ENCODE measurements at regions of chr7 and their contacts with region 1.

Region 1: DNA sequence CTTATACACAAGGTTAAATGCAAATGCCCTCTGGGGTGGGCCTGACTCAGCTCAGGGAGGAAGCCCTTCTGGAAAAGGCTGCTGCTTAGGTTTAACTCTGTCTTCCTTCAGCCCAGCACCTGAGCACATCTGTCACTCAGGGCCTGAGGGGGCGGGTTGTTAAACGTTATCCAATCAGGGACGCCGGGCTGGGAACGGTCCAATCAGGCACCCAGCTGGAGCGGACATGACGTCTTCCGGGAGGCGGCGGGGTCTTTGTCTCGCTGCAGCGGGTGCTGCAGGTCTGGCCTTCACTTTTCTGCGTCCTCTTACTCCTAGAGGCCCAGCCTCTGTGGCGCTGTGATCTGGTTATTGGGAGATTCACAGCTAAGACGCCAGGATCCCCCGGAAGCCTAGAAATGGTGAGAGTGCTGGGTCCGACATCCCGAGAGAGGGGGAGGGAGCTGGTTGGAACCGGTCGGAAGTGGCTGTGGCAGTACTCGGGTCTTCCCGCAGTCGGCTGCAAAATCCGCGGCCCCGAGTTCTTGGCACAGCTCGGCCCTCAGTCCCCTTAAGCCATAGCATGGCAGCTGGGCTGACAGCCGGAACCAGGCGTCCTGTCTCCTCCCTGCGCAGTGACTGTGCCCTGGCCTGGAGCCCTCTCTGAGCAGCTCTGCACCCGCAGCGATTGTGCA is at the start of gene ZNF138:
- DNase-seq: peak; percentile 95 to 98 (median 96)
- ATAC-seq: peak; percentile 100
- H3K4me3 ChIP-seq: peak within 1 kb of the TSS; percentile 40 to 97 (median 83)
- H3K27ac ChIP-seq: peak within 1 kb of the TSS; percentile 43 to 88 (median 81)
- H3K4me1 ChIP-seq: peaks cover 0 to 22% (median 12%) of the 10 kb centered on the region in 12 donors
- H3K27me3 ChIP-seq: no peaks in the 10 kb centered on the region
- CTCF ChIP-seq: peak in 1 of 12 donors; percentile 17
- POLR2A ChIP-seq: peak in 1 of 2 donors; percentile 60
- total RNA-seq, gene ZNF138: 3.1 to 8.1 (median 4.9) TPM

Region 2: DNA sequence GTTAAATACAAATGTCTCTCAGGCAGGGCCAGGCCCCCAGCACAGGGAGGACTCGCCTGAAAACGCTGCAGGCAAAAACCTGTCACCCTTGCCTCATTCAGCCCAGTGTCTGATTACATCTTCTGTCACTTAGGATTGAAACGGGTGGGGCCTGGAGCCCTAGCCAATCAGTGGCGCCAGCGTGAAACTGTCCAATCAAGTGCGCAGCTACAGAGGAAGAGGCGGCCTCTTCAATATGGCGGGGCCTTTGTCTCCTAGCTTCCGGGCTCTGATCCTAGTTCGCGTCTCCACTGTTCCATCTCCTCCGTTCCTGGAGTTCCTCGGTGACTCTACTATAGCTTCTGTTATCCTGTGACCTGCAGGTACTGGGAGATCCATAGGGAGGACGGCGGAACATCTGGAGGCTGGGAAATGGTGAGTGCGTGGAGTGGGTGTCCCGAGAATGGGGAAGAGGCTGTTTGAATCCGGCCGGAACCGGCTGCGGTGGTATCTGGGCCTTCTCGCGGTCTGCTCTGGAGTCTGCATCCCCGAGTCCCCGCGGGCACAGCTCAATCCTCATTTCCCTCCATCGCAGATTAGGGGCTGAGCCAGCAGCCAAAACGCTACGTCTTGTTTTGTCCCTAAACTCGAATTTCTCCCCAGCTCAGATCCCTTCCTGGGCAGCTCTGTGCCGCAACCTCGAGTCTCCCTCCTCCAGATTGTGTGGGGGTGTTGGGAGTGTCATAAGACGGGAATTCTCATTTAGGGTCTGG is 480.4 kb before region 1 on chr7 and contains the start of gene ZNF736:
- intact Hi-C with region 1: loop called in 1 of 10 experiments (anchors 10 kb)
- DNase-seq: peak; percentile 89 to 93 (median 92)
- ATAC-seq: peak; percentile 99 to 100 (median 100)
- H3K4me3 ChIP-seq: peak within 1 kb of the TSS; percentile 51 to 89 (median 73)
- H3K27ac ChIP-seq: peak within 1 kb of the TSS in 11 of 12 donors; percentile 24 to 79 (median 58)
- H3K4me1 ChIP-seq: peaks cover 0 to 25% (median 16%) of the 10 kb centered on the region in 12 donors
- H3K27me3 ChIP-seq: no peaks in the 10 kb centered on the region
- CTCF ChIP-seq: no peak
- POLR2A ChIP-seq: peak in 1 of 2 donors; percentile 61
- total RNA-seq, gene ZNF736: 2.5 to 9.0 (median 3.9) TPM

Region 3: GRCh38 chr7:64639282-64640001 is 154.9 kb before region 1 on chr7:
- intact Hi-C with region 1: no loop called
- DNase-seq: no peak
- ATAC-seq: no peak
- H3K4me3 ChIP-seq: no peak overlapping the region
- H3K27ac ChIP-seq: no peak overlapping the region
- H3K4me1 ChIP-seq: no peaks in the 10 kb centered on the region
- H3K27me3 ChIP-seq: no peaks in the 10 kb centered on the region
- CTCF ChIP-seq: no peak
- POLR2A ChIP-seq: no peak

Region 4: DNA sequence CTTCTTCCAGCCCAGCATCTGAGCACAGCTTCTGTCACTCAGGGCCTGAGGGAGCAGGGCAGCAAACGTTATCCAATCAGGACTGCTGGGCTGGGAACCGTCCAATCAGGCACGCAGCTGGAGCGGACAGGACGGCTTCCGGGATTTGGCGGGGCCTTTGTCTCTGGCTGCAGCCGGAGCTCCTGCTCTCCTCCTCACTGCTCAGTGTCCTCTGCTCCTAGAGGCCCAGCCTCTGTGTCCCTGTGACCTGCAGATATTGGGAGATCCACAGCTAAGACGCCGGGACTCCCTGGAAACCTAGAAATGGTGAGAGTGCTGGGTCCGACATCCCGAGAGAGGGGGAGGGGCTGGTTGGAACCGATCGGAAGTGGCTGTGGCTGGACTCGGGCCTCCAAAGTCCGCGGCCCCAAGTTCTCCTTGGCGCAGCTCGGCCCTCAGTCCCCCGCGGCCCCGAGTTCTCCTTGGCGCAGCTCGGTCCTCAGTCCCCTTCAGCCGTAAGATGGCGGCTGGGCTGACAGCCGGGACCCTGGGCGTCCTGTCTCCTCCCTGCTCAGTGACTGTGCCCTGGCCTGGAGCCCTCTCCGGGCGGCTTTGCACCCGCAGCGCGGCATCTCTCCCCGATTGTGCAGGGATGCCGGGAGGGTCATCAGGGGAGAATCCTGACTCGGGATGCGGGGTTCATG is 128.2 kb before region 1 on chr7 and contains the start of gene ZNF107:
- intact Hi-C with region 1: loop called in 1 of 10 experiments (anchors 10 kb)
- DNase-seq: peak; percentile 93 to 96 (median 94)
- ATAC-seq: peak; percentile 100
- H3K4me3 ChIP-seq: peak within 1 kb of the TSS; percentile 53 to 93 (median 74)
- H3K27ac ChIP-seq: peak within 1 kb of the TSS in 10 of 12 donors; percentile 62 to 78 (median 68)
- H3K4me1 ChIP-seq: peaks cover 0 to 16% (median 9%) of the 10 kb centered on the region in 12 donors
- H3K27me3 ChIP-seq: no peaks in the 10 kb centered on the region
- CTCF ChIP-seq: no peak
- POLR2A ChIP-seq: peak in 1 of 2 donors; percentile 52
- total RNA-seq, gene ZNF107: 1.2 to 4.0 (median 1.8) TPM

Region 5: DNA sequence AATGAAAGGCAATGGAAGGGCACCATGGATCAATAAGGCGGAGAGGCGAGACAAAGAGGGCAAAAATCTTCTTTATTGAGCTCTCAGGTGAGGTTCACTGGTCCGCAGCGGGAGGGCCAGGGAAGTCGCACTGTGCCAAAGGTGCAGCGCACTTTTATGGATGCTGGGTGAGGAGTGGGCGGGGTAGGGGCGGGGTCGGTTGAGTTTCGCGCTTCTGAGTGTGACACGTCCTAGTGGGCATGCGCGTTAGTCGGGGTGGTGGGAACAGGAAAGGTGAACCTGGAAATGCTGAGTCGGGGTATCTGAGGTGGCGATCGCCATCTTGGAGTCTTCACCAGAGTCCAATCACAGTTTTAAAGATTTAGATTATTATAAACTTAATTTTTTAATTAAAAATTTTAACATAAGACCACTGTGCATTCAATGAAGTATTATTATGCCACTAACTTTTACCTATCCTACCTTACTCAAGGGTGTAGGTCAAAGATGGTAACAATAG is 45.6 kb after region 1 on chr7:
- intact Hi-C with region 1: loop called in 1 of 10 experiments (anchors 5 kb)
- DNase-seq: no peak
- ATAC-seq: no peak
- H3K4me3 ChIP-seq: no peak overlapping the region
- H3K27ac ChIP-seq: no peak overlapping the region
- H3K4me1 ChIP-seq: no peaks in the 10 kb centered on the region
- H3K27me3 ChIP-seq: no peaks in the 10 kb centered on the region
- CTCF ChIP-seq: no peak
- POLR2A ChIP-seq: no peak

Region 6: DNA sequence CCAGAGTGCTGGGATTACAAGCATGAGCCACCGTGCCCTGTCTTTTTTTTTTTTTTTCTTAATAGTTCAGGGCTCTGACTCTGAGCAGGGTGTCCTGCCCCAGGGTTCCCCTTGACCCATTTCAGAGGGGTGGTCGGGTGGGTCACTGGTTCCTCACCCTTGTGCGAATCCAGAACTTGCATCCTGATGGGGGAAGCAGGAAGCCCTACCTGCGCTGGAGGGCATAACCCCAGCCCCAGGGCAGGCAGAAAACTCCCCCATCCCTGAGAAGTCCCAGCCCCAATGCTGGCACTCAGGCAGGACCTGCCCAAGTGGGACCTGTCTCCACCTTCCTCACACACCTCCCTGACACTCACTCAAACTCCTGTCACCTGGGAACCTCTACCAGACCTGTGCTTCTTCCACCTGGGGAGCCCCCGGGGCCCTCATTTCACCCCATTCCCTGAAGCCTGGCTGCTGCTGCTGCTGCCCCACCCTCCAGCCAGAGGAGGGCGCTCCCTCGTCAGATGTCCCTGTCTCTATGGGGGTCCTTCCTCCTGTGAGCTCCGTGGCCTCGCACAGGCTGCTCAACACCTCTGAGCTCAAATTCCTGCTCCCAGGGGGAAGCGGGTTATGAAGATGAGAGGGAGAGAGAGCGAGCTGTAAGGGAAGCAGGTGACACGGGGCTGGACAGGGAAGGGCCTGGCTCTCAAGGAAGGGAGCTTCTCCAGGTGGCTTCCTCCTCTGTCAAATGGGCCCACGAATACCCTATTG is 93.6 kb after region 1 on chr7:
- intact Hi-C with region 1: loop called in 3 of 10 experiments (anchors 10 kb)
- DNase-seq: peak in 2 of 5 donors; percentile 29 to 58
- ATAC-seq: peak in 3 of 4 donors; percentile 33 to 68 (median 50)
- H3K4me3 ChIP-seq: peak overlapping the region; percentile 22 to 67 (median 56)
- H3K27ac ChIP-seq: peak overlapping the region in 1 of 12 donors; percentile 15
- H3K4me1 ChIP-seq: peaks cover 0 to 31% (median 19%) of the 10 kb centered on the region in 12 donors
- H3K27me3 ChIP-seq: peaks cover 0 to 28% (median 0%) of the 10 kb centered on the region in 9 donors
- CTCF ChIP-seq: peak; percentile 16 to 60 (median 44)
- POLR2A ChIP-seq: no peak

Region 7: DNA sequence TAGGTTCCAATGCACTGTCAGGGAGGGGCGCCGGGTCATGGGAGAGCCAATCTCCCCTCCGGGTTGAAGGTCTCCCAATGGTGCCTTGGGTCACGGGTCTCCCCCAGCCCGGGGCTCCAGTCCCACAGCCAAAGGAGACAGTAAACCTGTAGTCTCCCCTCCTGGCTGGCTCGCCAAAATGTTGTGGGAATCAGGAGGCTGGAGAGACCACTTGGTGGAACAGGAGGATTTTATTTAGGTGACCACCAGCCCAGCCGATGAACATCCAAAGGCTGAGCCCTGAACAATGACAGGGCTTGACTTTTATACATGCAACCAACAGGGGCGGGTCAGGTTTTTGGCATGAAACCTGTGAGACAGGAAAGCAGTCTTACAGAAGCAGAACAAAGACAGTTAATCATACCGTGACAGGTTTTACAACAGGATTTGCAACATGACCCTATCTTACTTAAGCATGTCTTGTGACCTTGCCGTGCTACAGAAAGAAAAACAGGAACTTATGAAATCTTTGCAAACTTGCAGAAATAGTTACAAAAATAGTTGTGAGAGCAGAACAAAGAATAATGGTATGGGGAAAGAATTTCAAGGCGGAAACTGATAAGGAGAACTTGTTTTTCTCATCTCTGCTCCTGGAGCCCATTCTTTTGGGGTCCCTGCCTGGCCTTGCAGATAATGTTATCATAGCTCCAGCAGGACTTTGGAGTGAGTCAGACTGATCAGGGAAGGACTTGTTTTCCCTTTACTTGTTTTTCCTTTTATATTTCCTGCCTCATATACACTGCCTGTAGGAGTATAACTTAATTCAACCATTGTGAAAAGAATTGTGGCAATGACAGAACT is 205.1 kb after region 1 on chr7:
- intact Hi-C with region 1: no loop called
- DNase-seq: no peak
- ATAC-seq: peak in 3 of 4 donors; percentile 13 to 47 (median 35)
- H3K4me3 ChIP-seq: no peak overlapping the region
- H3K27ac ChIP-seq: peak overlapping the region in 9 of 12 donors; percentile 26 to 86 (median 63)
- H3K4me1 ChIP-seq: peaks cover 0 to 59% (median 17%) of the 10 kb centered on the region in 12 donors
- H3K27me3 ChIP-seq: no peaks in the 10 kb centered on the region
- CTCF ChIP-seq: no peak
- POLR2A ChIP-seq: no peak